Activated naive CD4-positive, alpha-beta T cell treated with anti-CD3 and anti-CD28 coated beads for 36 hours (primary cell): ENCODE measurements at regions of chrX and their contacts with region 1.

Region 1: GRCh38 chrX:107272431-107272921 is 66.1 kb downstream of the DNAAF6 start:
- DNase-seq: peak; percentile 39
- H3K4me3 Mint-ChIP-seq: peak overlapping the region; percentile 32
- H3K27ac Mint-ChIP-seq: no peak overlapping the region
- H3K4me1 Mint-ChIP-seq: no peaks in the 10 kb centered on the region
- H3K27me3 Mint-ChIP-seq: peaks cover 16% of the 10 kb centered on the region

Region 2: GRCh38 chrX:106450405-106450804 is 822.1 kb before region 1 on chrX:
- CTCF ChIA-PET with region 1: no interaction called
- intact Hi-C with region 1: no loop called
- DNase-seq: no peak
- H3K4me3 Mint-ChIP-seq: no peak overlapping the region
- H3K27ac Mint-ChIP-seq: no peak overlapping the region
- H3K4me1 Mint-ChIP-seq: no peaks in the 10 kb centered on the region
- H3K27me3 Mint-ChIP-seq: no peaks in the 10 kb centered on the region

Region 3: DNA sequence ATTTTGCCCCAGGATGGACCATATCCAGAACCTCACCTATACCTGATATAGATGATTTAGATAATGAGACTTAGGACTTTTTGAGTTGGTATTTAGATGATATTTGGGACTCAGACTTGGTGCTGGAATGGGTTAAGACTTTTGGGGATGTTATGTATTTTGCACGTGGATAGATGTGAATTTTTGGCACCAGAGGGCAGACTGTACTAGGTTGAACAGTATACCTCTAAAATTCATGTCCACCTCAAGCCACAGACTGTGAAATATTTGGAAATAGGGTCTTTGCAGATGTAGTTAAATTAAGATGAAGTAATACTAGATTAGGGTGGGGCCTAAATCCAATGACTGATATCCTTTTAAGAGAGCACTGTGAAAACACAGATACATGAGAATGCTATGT is 169.5 kb before region 1 on chrX:
- CTCF ChIA-PET with region 1: no interaction called
- intact Hi-C with region 1: loop called (anchors 10 kb)
- DNase-seq: no peak
- H3K4me3 Mint-ChIP-seq: no peak overlapping the region
- H3K27ac Mint-ChIP-seq: no peak overlapping the region
- H3K4me1 Mint-ChIP-seq: peaks cover 5% of the 10 kb centered on the region
- H3K27me3 Mint-ChIP-seq: no peaks in the 10 kb centered on the region

Region 4: GRCh38 chrX:107731831-107732502 is 459.5 kb after region 1 on chrX:
- CTCF ChIA-PET with region 1: no interaction called
- intact Hi-C with region 1: no loop called
- DNase-seq: no peak
- H3K4me3 Mint-ChIP-seq: no peak overlapping the region
- H3K27ac Mint-ChIP-seq: no peak overlapping the region
- H3K4me1 Mint-ChIP-seq: peaks cover 9% of the 10 kb centered on the region
- H3K27me3 Mint-ChIP-seq: no peaks in the 10 kb centered on the region